H1 (cell line): ENCODE measurements at regions of chr16 and their contacts with region 1.

Region 1: GRCh38 chr16:57711346-57712026 is 16.9 kb downstream of the DRC7 start:
- DNase-seq: no peak
- H3K4me3 ChIP-seq: no peak overlapping the region
- H3K27ac ChIP-seq: no peak overlapping the region
- H3K4me1 ChIP-seq: no peaks in the 10 kb centered on the region
- H3K27me3 ChIP-seq: no peaks in the 10 kb centered on the region; a peak in 1 of 7 replicates
- CTCF ChIP-seq: no peak
- EP300 ChIP-seq: no peak
- POLR2A ChIP-seq: no peak
- RAD21 ChIP-seq: no peak

Region 2: GRCh38 chr16:57601801-57602478 is 109.5 kb before region 1 on chr16:
- CTCF ChIA-PET with region 1: no interaction called
- POLR2A ChIA-PET with region 1: no interaction called
- DNase-seq: no peak
- H3K4me3 ChIP-seq: no peak overlapping the region
- H3K27ac ChIP-seq: no peak overlapping the region
- H3K4me1 ChIP-seq: no peaks in the 10 kb centered on the region; a peak in 1 of 7 replicates
- H3K27me3 ChIP-seq: no peaks in the 10 kb centered on the region; a peak in 1 of 7 replicates
- CTCF ChIP-seq: no peak
- EP300 ChIP-seq: no peak
- POLR2A ChIP-seq: no peak
- RAD21 ChIP-seq: no peak

Region 3: DNA sequence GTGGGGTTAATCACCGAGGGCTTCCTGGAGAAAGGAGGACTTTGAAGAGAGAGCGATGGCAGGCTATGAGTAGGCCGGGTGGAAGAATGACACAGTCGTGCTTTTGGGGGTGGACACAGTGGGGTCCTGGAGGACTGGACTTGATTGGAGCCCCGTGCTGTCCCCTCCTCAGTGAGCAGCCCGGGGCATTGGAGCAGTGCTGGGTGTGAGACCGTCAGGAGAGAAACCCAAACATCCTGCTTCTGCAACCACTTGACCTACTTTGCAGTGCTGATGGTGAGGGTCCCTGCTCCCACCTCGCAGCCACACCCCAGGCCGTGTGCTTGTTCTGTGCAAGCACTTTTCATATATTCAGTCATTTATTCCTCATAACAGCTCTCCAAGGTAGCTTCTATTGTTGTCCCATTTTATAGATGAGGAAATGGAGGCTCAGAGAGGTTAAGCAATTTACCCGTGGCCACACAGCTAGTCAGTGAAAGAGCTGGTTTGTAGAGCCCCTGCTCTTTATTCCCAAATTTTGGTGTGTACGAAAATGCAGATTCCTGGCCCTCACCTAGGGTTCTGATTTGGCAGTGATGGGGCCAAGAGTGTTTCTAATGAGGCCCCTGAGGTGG is 55.0 kb before region 1 on chr16:
- CTCF ChIA-PET with region 1: no interaction called
- POLR2A ChIA-PET with region 1: no interaction called
- DNase-seq: no peak
- H3K4me3 ChIP-seq: no peak overlapping the region
- H3K27ac ChIP-seq: no peak overlapping the region
- H3K4me1 ChIP-seq: peaks cover 0 to 3% (median 0%) of the 10 kb centered on the region in 4 experiments; a peak in 3 of 7 replicates
- H3K27me3 ChIP-seq: no peaks in the 10 kb centered on the region
- CTCF ChIP-seq: no peak
- EP300 ChIP-seq: no peak
- POLR2A ChIP-seq: no peak
- RAD21 ChIP-seq: no peak

Region 4: GRCh38 chr16:57667526-57668258 is 43.8 kb before region 1 on chr16:
- CTCF ChIA-PET with region 1: interaction called, 15 read pairs
- POLR2A ChIA-PET with region 1: no interaction called
- DNase-seq: peak in 1 of 2 experiments; percentile 75
- H3K4me3 ChIP-seq: no peak overlapping the region
- H3K27ac ChIP-seq: no peak overlapping the region
- H3K4me1 ChIP-seq: peaks cover 0 to 4% (median 0%) of the 10 kb centered on the region in 4 experiments; a peak in 3 of 7 replicates
- H3K27me3 ChIP-seq: no peaks in the 10 kb centered on the region
- CTCF ChIP-seq: peak; percentile 64 to 68 (median 65)
- EP300 ChIP-seq: no peak
- POLR2A ChIP-seq: no peak
- RAD21 ChIP-seq: peak; percentile 20 to 47; a peak in 3 of 4 replicates

Region 5: GRCh38 chr16:57723170-57723569 is 11.7 kb after region 1 on chr16:
- CTCF ChIA-PET with region 1: interaction called, 10 read pairs
- POLR2A ChIA-PET with region 1: no interaction called
- DNase-seq: peak in 1 of 2 experiments; percentile 77
- H3K4me3 ChIP-seq: no peak overlapping the region
- H3K27ac ChIP-seq: no peak overlapping the region
- H3K4me1 ChIP-seq: no peaks in the 10 kb centered on the region
- H3K27me3 ChIP-seq: no peaks in the 10 kb centered on the region; a peak in 1 of 7 replicates
- CTCF ChIP-seq: peak; percentile 58 to 81 (median 67)
- EP300 ChIP-seq: no peak
- POLR2A ChIP-seq: no peak
- RAD21 ChIP-seq: peak; percentile 73 to 85